Motor neuron (in vitro differentiated cells): ENCODE measurements at regions of chr2 and their contacts with region 1.

Region 1: DNA sequence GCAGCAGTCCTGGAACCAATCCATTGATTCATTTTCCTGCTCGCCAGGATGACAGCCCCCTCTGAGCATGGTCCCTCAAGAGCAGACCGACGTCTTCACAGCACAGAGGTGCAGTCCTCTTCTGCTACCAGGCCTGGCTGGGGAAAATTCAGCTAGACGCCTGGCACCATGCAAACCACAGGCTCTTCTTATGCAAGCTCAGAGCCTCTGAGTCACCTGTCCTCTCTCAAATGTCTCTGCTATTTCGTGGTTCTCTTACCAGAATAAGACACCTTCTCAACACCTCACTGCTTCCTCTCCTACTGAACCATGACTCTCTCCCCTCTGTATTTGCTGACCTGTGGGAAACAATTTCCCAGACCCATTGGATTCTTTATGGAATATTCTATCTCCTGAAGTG is 79.8 kb upstream of the CYRIA start:
- ATAC-seq: no peak
- H3K4me3 ChIP-seq: no peak overlapping the region
- H3K27ac ChIP-seq: no peak overlapping the region
- H3K4me1 ChIP-seq: peaks cover 9 to 11% of the 10 kb centered on the region in 2 donors

Region 2: GRCh38 chr2:16608661-16609643 is 136.5 kb before region 1 on chr2:
- in situ Hi-C with region 1: loop called in 6 of 9 experiments (anchors 10 kb)
- ATAC-seq: peak; percentile 82 to 92 (median 90)
- H3K4me3 ChIP-seq: peak overlapping the region; percentile 22 to 32 (median 30)
- H3K27ac ChIP-seq: peak overlapping the region; percentile 60 to 78
- H3K4me1 ChIP-seq: peaks cover 6 to 14% of the 10 kb centered on the region in 2 donors